ENCODE measurements at regions of chr10 and their contacts with region 1.

Region 1: GRCh38 chr10:125514206-125515186 is 168.5 kb downstream of the TEX36 start:
- DNase-seq: peak; percentile 78 to 82
- H3K4me3 ChIP-seq: no peak overlapping the region
- H3K27ac ChIP-seq: 0 out of 2 replicates have a peak overlapping the region, but pooled peaks have one; percentile 12
- H3K4me1 ChIP-seq: peaks cover 19% of the 10 kb centered on the region
- H3K27me3 ChIP-seq: no peaks in the 10 kb centered on the region
- CTCF ChIP-seq: no peak

Region 2: DNA sequence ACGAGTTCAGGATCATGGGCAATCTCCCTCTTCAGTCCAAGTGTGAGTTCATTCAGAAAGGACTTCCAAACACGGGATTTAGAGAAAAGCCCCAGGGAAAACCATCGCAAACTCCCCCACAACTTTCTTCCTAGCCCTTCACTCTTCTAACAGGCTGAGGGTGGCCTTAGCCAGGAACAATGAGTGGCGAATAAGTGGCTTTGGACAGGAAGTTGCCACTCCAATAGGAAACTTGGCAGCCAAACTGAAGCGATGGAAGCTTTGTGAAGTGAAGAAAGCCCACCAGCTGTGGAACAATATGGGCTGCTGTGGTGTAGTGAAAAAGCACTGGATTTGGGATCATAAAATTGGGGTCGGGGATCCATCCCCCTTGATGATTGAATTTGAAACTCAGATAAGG is 24.8 kb before region 1 on chr10:
- CTCF ChIA-PET with region 1: no interaction called
- POLR2A ChIA-PET with region 1: no interaction called
- intact Hi-C with region 1: no loop called
- DNase-seq: no peak
- H3K4me3 ChIP-seq: no peak overlapping the region
- H3K27ac ChIP-seq: no peak overlapping the region
- H3K4me1 ChIP-seq: no peaks in the 10 kb centered on the region
- H3K27me3 ChIP-seq: no peaks in the 10 kb centered on the region
- CTCF ChIP-seq: no peak

Region 3: GRCh38 chr10:125661941-125662515 is 147.5 kb after region 1 on chr10:
- CTCF ChIA-PET with region 1: no interaction called
- POLR2A ChIA-PET with region 1: no interaction called
- intact Hi-C with region 1: loop called (anchors 1 kb)
- DNase-seq: peak; percentile 73 to 93
- H3K4me3 ChIP-seq: no peak overlapping the region
- H3K27ac ChIP-seq: peak overlapping the region; percentile 90
- H3K4me1 ChIP-seq: peaks cover 22% of the 10 kb centered on the region
- H3K27me3 ChIP-seq: no peaks in the 10 kb centered on the region
- CTCF ChIP-seq: no peak